K562 (cell line): ENCODE measurements at regions of chr17 and their contacts with region 1.

Region 1: DNA sequence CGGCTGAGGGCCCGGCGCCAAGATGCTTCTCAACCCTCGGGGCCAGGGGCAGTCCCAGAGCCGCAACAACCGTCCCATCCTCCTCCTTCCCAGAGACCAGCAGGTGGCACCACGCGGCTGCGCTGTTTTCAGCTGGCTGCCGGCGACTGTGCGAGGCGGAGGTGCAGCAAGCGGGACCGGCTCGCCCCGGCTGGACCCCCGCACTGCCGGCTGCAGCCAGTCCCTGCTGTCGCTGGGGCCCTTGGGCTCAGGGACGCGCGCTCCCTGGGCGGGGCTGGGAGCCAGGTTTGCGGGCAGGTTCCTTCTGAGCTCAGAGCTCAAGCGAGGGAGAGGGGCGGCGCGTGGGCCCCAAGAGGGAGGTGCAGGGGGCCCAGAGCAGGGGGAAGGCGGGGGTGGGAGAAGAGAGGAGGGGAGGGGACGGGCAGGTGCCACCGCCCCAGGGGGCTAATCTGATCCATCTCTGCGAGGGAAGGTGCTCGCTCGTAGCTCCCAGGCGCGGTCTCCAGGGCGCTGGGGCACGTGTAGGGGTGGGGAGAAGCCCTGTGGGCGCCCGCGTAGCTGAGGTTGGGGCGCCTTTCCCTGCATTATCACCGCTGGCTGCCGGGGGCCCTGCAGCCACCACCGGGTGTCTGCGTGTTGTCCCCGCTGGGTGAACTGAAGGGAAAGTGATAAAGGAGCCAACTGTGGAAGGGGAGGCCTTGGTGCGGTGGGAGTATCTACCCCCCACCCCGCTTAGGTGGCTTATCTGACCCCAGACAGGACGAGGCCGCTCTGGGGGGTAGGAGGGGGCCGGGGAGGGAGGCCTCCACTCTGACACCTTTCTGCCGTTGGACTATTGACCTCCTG is 24.2 kb downstream of the STAT5A start:
- DNase-seq: peak; percentile 89 to 97 (median 91)
- ATAC-seq: peak; percentile 69
- H3K4me3 ChIP-seq: peak overlapping the region; percentile 13
- H3K27ac ChIP-seq: peak overlapping the region; percentile 100
- H3K4me1 ChIP-seq: peaks cover 81 to 89% of the 10 kb centered on the region in 2 experiments
- H3K27me3 ChIP-seq: no peaks in the 10 kb centered on the region
- CTCF ChIP-seq: peak; percentile 69 to 81 (median 70)
- EP300 ChIP-seq: peak; percentile 96
- POLR2A ChIP-seq: peak; percentile 86
- RAD21 ChIP-seq: peak; percentile 60 to 71

Region 2: GRCh38 chr17:42221937-42222745 is 90.4 kb before region 1 on chr17:
- CTCF ChIA-PET with region 1: interaction called, 3 read pairs
- POLR2A ChIA-PET with region 1: interaction called, 7 read pairs
- in situ Hi-C with region 1: no loop called
- intact Hi-C with region 1: loop called (anchors 10 kb)
- DNase-seq: peak; percentile 28 to 80 (median 54)
- ATAC-seq: peak; percentile 96
- H3K4me3 ChIP-seq: no peak overlapping the region
- H3K27ac ChIP-seq: peak overlapping the region; percentile 18; the same call in 1 of the 3 replicates
- H3K4me1 ChIP-seq: peaks cover 0 to 3% of the 10 kb centered on the region in 2 experiments; a peak in 1 of 5 replicates
- H3K27me3 ChIP-seq: no peaks in the 10 kb centered on the region
- CTCF ChIP-seq: peak; percentile 76 to 89 (median 81)
- EP300 ChIP-seq: no peak
- POLR2A ChIP-seq: no peak; the same call in 1 of the 2 replicates
- RAD21 ChIP-seq: peak; percentile 63 to 75

Region 3: DNA sequence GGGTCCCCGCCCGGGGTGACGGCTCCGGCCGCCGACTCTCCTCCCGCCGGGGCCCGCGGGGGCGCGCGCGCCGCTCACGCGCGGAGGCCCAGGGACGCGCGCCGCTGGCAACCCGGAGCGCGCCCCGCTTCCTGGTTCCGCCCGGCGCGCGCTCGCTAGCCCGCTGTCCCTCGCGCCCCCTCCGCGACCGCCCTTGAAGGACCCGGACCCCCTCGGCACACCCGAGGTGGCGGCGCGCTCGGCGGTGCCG is 36.2 kb before region 1 on chr17 and contains the start of gene STAT5B:
- CTCF ChIA-PET with region 1: no interaction called
- POLR2A ChIA-PET with region 1: interaction called, 5 read pairs
- in situ Hi-C with region 1: no loop called
- intact Hi-C with region 1: loop called (anchors 1 kb)
- DNase-seq: peak; percentile 84 to 92 (median 88)
- ATAC-seq: peak; percentile 1
- H3K4me3 ChIP-seq: peak within 1 kb of the TSS; percentile 81
- H3K27ac ChIP-seq: peak within 1 kb of the TSS; percentile 93
- H3K4me1 ChIP-seq: peaks cover 11 to 23% of the 10 kb centered on the region in 2 experiments; a peak in 4 of 5 replicates
- H3K27me3 ChIP-seq: no peaks in the 10 kb centered on the region
- CTCF ChIP-seq: no peak
- EP300 ChIP-seq: no peak
- POLR2A ChIP-seq: no peak
- RAD21 ChIP-seq: no peak
- polyA plus RNA-seq, gene STAT5B: 20.8 to 23.5 TPM

Region 4: DNA sequence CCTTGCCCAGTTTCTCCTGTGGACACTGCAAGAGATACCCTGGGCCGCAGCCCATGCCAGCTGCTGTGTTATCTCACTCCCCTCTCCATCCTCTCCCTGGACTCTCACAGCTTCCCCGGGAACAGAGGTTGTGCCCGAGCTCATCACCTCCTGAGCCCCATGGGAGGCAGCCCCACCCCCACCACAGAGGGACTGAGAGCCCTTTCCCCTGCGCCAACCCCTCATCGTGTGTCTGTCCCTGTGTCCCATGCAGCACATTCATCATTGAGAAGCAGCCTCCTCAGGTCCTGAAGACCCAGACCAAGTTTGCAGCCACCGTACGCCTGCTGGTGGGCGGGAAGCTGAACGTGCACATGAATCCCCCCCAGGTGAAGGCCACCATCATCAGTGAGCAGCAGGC is 11.5 kb before region 1 on chr17:
- CTCF ChIA-PET with region 1: no interaction called
- POLR2A ChIA-PET with region 1: interaction called, 17 read pairs
- in situ Hi-C with region 1: no loop called
- intact Hi-C with region 1: no loop called
- DNase-seq: no peak
- ATAC-seq: no peak
- H3K4me3 ChIP-seq: no peak overlapping the region
- H3K27ac ChIP-seq: no peak overlapping the region
- H3K4me1 ChIP-seq: peaks cover 0 to 20% of the 10 kb centered on the region in 2 experiments; a peak in 4 of 5 replicates
- H3K27me3 ChIP-seq: no peaks in the 10 kb centered on the region
- CTCF ChIP-seq: no peak
- EP300 ChIP-seq: no peak
- POLR2A ChIP-seq: peak; percentile 38; the same call in 1 of the 2 replicates
- RAD21 ChIP-seq: no peak